ENCODE measurements at regions of chr1 and their contacts with region 1.

Region 1: GRCh38 chr1:92310185-92310597 is 11.3 kb downstream of the RPAP2 start:
- H3K4me3 Mint-ChIP-seq: no peak overlapping the region
- H3K27ac Mint-ChIP-seq: no peak overlapping the region
- H3K4me1 Mint-ChIP-seq: peaks cover 10% of the 10 kb centered on the region
- H3K27me3 Mint-ChIP-seq: no peaks in the 10 kb centered on the region

Region 2: GRCh38 chr1:92485381-92486257 is 175.4 kb after region 1 on chr1:
- intact Hi-C with region 1: loop called (anchors 10 kb)
- H3K4me3 Mint-ChIP-seq: peak overlapping the region; percentile 90
- H3K27ac Mint-ChIP-seq: peak overlapping the region; percentile 82
- H3K4me1 Mint-ChIP-seq: peaks cover 35% of the 10 kb centered on the region
- H3K27me3 Mint-ChIP-seq: peaks cover 48% of the 10 kb centered on the region

Region 3: GRCh38 chr1:92599184-92599583 is 289.0 kb after region 1 on chr1:
- intact Hi-C with region 1: loop called (anchors 5 kb)
- H3K4me3 Mint-ChIP-seq: no peak overlapping the region
- H3K27ac Mint-ChIP-seq: no peak overlapping the region
- H3K4me1 Mint-ChIP-seq: peaks cover 6% of the 10 kb centered on the region
- H3K27me3 Mint-ChIP-seq: no peaks in the 10 kb centered on the region

Region 4: GRCh38 chr1:92623187-92623778 is 313.1 kb after region 1 on chr1:
- intact Hi-C with region 1: loop called (anchors 10 kb)
- H3K4me3 Mint-ChIP-seq: no peak overlapping the region
- H3K27ac Mint-ChIP-seq: no peak overlapping the region
- H3K4me1 Mint-ChIP-seq: no peaks in the 10 kb centered on the region
- H3K27me3 Mint-ChIP-seq: no peaks in the 10 kb centered on the region

Measured in dendritic cell treated with granulocyte-macrophage colony-stimulating factor and Interleukin-4, amounts not matched to agents 40 ng/mL and 50 ng/mL, for 4 days (primary cell).